ENCODE measurements at regions of chr15 and their contacts with region 1.

Region 1: GRCh38 chr15:52005748-52006701 is 13.0 kb upstream of the MAPK6 start:
- DNase-seq: peak; percentile 73
- H3K4me3 Mint-ChIP-seq: peak overlapping the region; percentile 51
- H3K27ac Mint-ChIP-seq: peak overlapping the region; percentile 82
- H3K4me1 Mint-ChIP-seq: peaks cover 57% of the 10 kb centered on the region
- H3K27me3 Mint-ChIP-seq: no peaks in the 10 kb centered on the region

Region 2: GRCh38 chr15:51971375-51972133 is 34.5 kb before region 1 on chr15 and contains the start of gene LEO1:
- intact Hi-C with region 1: loop called (anchors 5 kb)
- DNase-seq: peak; percentile 97
- H3K4me3 Mint-ChIP-seq: peak within 1 kb of the TSS; percentile 87
- H3K27ac Mint-ChIP-seq: peak within 1 kb of the TSS; percentile 94
- H3K4me1 Mint-ChIP-seq: peaks cover 23% of the 10 kb centered on the region
- H3K27me3 Mint-ChIP-seq: peaks cover 2% of the 10 kb centered on the region
- total RNA-seq, gene LEO1: 35.0 and 35.7 TPM in 2 replicates

Region 3: DNA sequence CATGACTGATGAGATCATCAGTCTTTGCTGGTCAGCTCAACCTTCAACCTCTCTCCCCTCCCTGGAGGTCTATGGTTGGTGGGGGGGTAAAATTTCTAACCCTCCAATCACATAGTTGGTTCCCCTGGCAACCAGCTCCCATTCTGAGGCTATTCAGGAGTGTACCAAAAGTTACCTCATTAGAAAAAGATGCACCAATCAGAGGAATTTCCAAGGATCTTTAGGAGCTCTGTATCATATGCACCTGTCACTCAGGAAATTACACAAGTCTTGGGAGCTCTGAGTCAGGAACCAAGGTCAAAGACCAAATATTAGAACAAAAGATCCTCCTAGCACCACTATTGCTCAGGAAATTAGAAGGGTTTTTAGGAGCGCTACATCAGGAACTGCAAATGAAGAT is 13.0 kb before region 1 on chr15:
- intact Hi-C with region 1: no loop called
- DNase-seq: no peak
- H3K4me3 Mint-ChIP-seq: no peak overlapping the region
- H3K27ac Mint-ChIP-seq: no peak overlapping the region
- H3K4me1 Mint-ChIP-seq: no peaks in the 10 kb centered on the region
- H3K27me3 Mint-ChIP-seq: peaks cover 2% of the 10 kb centered on the region

Region 4: GRCh38 chr15:52019388-52020220 is 13.6 kb after region 1 on chr15:
- intact Hi-C with region 1: loop called (anchors 1 kb)
- DNase-seq: peak; percentile 91
- H3K4me3 Mint-ChIP-seq: peak overlapping the region; percentile 98
- H3K27ac Mint-ChIP-seq: peak overlapping the region; percentile 100
- H3K4me1 Mint-ChIP-seq: peaks cover 32% of the 10 kb centered on the region
- H3K27me3 Mint-ChIP-seq: peaks cover 10% of the 10 kb centered on the region

Measured in activated CD4-positive, alpha-beta T cell treated with anti-CD3 and anti-CD28 coated beads, Interleukin-2, amount 10 ng/mL, durations not matched to agents 24 days and 14 days (primary cell).